ENCODE measurements at regions of chr6 and their contacts with region 1.

Region 1: DNA sequence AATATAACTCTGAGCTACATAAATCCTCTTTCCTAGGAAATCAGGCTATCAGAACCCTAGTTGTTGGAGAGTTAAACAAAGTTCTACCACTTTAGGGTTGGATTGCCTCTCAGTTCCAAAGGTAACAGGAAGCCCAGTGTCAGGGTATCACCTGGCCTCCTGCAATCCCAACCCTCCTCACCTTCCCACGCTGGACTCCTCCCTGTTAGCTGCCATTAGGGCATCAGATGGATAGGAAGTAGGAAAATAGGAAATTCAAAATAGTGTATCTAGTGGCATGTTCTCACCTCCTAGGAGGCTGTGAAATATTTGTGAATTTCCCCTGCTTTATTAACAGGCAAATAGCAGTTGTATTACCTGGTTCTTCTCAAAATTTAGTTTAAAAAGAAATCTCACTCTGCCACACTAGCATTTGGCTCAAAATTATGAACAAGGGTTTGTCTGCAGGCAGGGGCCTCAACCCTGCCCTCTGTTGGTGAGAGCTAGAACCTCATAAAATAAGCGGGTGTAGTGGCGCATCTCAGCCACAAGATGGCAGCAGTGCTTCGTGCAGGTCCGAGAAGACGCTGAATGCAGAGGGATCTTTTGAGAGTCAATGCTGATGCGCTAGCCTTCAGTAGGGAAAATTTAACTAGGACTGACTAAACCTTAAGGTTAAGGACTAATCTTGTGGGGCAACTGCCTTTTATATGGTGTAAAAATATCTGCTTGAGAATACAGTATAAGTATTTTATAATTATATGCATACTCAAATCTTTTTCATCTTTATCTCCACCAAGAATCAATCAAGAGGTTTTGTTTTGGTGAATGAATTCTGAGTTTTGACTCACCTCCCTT is 209.8 kb upstream of the KCNQ5 start:
- DNase-seq: peak; percentile 76
- H3K4me3 Mint-ChIP-seq: no peak overlapping the region
- H3K27ac Mint-ChIP-seq: no peak overlapping the region
- H3K4me1 Mint-ChIP-seq: no peaks in the 10 kb centered on the region
- H3K27me3 Mint-ChIP-seq: peaks cover 14% of the 10 kb centered on the region

Region 2: GRCh38 chr6:72422171-72422570 is 10.1 kb after region 1 on chr6:
- CTCF ChIA-PET with region 1: interaction called, 10 read pairs
- POLR2A ChIA-PET with region 1: no interaction called
- DNase-seq: no peak
- H3K4me3 Mint-ChIP-seq: no peak overlapping the region
- H3K27ac Mint-ChIP-seq: no peak overlapping the region
- H3K4me1 Mint-ChIP-seq: no peaks in the 10 kb centered on the region
- H3K27me3 Mint-ChIP-seq: peaks cover 2% of the 10 kb centered on the region

Measured in activated CD4-positive, alpha-beta T cell treated with anti-CD3 and anti-CD28 coated beads, Interleukin-2, amount 10 ng/mL, durations not matched to agents 7 days and 5 days (primary cell).